ENCODE measurements at regions of chr19 and their contacts with region 1.

Region 1: DNA sequence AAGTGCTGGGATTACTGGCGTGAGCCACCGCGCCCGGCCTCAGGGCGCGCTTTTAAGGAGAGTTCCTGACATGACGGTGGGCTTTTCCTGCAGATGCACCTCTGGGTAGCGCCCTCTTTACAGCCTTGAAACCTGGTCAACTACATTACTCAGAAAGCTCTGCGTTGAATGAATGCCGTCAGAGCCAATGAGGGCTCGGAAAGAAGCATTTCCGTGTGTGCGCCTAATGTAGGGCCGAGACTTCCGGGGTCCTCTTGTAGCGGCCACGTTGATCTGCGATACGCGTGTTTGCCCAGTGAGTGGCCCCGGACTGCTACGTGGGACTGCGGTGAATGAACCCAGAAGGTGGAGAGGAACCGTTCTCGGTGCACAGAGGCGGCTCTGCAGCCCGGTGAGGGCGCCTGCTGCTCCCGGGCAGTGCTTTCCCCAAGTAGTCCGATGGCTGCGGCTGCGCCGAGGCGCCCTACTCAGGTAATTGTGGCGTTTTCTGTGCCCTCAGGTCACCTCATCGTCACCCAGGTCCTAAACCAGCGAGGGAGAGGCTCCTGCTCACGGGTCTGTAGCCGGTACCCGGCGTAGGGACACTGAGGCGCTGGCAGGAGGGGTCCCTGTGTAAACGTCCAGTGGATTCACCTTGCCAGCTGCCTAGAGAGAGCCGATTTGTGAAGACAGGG is 4.9 kb upstream of the ZNF552 start:
- DNase-seq: peak; percentile 76
- H3K4me3 Mint-ChIP-seq: peak overlapping the region; percentile 99
- H3K27ac Mint-ChIP-seq: peak overlapping the region; percentile 98
- H3K4me1 Mint-ChIP-seq: peaks cover 50% of the 10 kb centered on the region
- H3K27me3 Mint-ChIP-seq: no peaks in the 10 kb centered on the region

Region 2: GRCh38 chr19:57769345-57770131 is 50.1 kb before region 1 on chr19 and contains the start of gene ZNF586:
- intact Hi-C with region 1: loop called (anchors 1 kb)
- DNase-seq: peak; percentile 85
- H3K4me3 Mint-ChIP-seq: peak within 1 kb of the TSS; percentile 94
- H3K27ac Mint-ChIP-seq: peak within 1 kb of the TSS; percentile 89
- H3K4me1 Mint-ChIP-seq: peaks cover 24% of the 10 kb centered on the region
- H3K27me3 Mint-ChIP-seq: no peaks in the 10 kb centered on the region
- total RNA-seq, gene ZNF586: 13.6 and 13.8 TPM in 2 replicates

Region 3: GRCh38 chr19:57850553-57851017 is 31.0 kb after region 1 on chr19:
- intact Hi-C with region 1: loop called (anchors 1 kb)
- DNase-seq: no peak
- H3K4me3 Mint-ChIP-seq: peak overlapping the region; percentile 92
- H3K27ac Mint-ChIP-seq: peak overlapping the region; percentile 93
- H3K4me1 Mint-ChIP-seq: peaks cover 17% of the 10 kb centered on the region
- H3K27me3 Mint-ChIP-seq: no peaks in the 10 kb centered on the region

Region 4: GRCh38 chr19:57964748-57965147 is 145.1 kb after region 1 on chr19:
- intact Hi-C with region 1: no loop called
- DNase-seq: no peak
- H3K4me3 Mint-ChIP-seq: no peak overlapping the region
- H3K27ac Mint-ChIP-seq: no peak overlapping the region
- H3K4me1 Mint-ChIP-seq: no peaks in the 10 kb centered on the region
- H3K27me3 Mint-ChIP-seq: no peaks in the 10 kb centered on the region

Region 5: GRCh38 chr19:58002384-58003173 is 183.0 kb after region 1 on chr19 and contains the start of gene ZNF606:
- intact Hi-C with region 1: loop called (anchors 1 kb)
- DNase-seq: peak; percentile 80
- H3K4me3 Mint-ChIP-seq: peak within 1 kb of the TSS; percentile 84
- H3K27ac Mint-ChIP-seq: peak within 1 kb of the TSS; percentile 67
- H3K4me1 Mint-ChIP-seq: peaks cover 20% of the 10 kb centered on the region
- H3K27me3 Mint-ChIP-seq: no peaks in the 10 kb centered on the region
- total RNA-seq, gene ZNF606: 6.3 and 6.4 TPM in 2 replicates

Measured in activated T-helper 1 cell treated with anti-CD3 and anti-CD28 coated beads, Interleukin-12 subunit alpha, Interleukin-12 subunit beta, Interleukin-2, Interleukin-4 antibody, amounts not matched to agents 30 ng/mL and 10 ng/mL and 1 ng/mL, durations not matched to agents 14 hours and 24 hours and 36 hours (primary cell).